K562 (cell line): ENCODE measurements at regions of chr1 and their contacts with region 1.

Region 1: DNA sequence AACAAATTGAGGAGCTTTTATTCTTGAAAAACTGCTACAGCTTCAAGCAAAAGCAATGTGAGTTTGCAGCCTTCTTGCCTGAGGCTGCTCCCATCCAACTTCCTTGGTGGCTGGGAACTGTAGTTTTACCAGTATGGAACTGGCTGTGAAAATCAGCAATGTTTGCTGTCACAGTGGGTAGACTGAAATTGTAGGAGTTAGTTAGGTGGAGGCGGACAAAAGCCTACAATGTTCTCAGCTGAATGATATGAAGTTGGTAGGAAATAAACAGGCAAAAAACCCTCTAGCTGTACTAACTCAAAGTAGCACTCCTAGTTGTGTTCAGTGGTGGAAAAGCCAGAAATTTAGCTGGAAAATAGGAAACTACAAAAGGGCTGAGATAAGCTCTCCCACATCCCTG is 18.5 kb downstream of the HAX1 start:
- DNase-seq: peak in 2 of 4 experiments; percentile 10 to 32
- ATAC-seq: peak; percentile 73
- H3K4me3 ChIP-seq: no peak overlapping the region
- H3K27ac ChIP-seq: peak overlapping the region; percentile 76
- H3K4me1 ChIP-seq: peaks cover 12 to 14% of the 10 kb centered on the region in 2 experiments; a peak in 4 of 5 replicates
- H3K27me3 ChIP-seq: no peaks in the 10 kb centered on the region
- CTCF ChIP-seq: no peak; a peak in 1 of 6 replicates
- EP300 ChIP-seq: no peak
- POLR2A ChIP-seq: no peak
- RAD21 ChIP-seq: no peak

Region 2: DNA sequence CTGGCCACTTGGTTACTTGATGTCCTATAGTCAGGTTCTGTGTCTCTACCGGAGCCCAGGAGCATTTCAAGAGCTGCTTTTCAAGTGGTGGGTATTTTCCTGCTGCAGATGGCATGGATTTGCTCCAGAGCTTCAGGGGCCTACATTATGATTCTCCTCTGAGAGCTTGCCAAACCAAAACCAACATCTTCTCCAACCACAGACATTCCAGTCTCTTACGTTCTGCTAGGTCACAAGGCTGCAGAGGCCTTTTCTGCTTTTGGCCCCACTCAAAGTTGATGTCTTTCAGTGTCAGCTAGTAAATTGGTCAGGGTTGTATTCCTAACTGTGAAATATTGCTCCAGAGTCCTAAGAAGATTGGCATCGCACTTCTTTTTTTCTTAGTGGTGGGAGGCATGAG is 15.2 kb after region 1 on chr1:
- CTCF ChIA-PET with region 1: no interaction called
- POLR2A ChIA-PET with region 1: interaction called, 10 read pairs
- in situ Hi-C with region 1: no loop called
- intact Hi-C with region 1: no loop called
- DNase-seq: no peak
- ATAC-seq: no peak
- H3K4me3 ChIP-seq: no peak overlapping the region
- H3K27ac ChIP-seq: no peak overlapping the region
- H3K4me1 ChIP-seq: peaks cover 9 to 13% of the 10 kb centered on the region in 2 experiments; a peak in 3 of 5 replicates
- H3K27me3 ChIP-seq: no peaks in the 10 kb centered on the region
- CTCF ChIP-seq: no peak
- EP300 ChIP-seq: no peak
- POLR2A ChIP-seq: no peak
- RAD21 ChIP-seq: no peak

Region 3: DNA sequence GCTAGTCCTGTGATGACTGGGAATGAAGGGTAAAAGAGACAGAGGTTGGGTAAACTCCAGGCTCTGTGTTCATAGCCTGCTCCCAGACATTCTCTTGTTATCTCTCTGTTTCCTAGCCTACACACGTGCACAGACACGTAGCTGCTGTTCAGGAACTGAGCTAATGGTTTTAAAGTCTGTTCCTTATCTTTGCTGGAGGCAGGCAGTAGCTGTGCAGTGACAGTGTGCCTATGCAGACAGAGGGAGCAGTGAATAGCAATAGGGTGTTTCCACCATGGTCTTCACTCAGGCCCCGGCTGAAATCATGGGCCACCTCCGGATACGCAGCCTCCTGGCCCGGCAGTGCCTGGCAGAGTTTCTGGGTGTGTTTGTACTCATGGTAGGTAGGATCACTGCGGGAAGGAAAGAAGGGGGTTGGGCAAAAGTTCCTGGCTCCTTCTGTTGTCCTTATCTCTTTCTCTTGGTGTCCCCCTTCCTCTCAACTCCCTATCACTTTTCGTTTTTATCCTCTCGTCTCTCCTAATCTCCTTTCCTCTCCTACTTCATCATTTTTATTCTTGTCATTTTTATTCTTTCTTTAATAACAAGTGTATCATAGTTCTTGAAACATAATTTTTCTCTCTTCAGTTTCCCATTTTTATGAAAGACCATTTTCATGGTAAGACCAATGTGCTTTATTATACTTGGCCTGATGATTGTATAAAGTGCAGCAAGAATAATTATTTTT is 30.1 kb after region 1 on chr1 and contains the start of gene AQP10:
- CTCF ChIA-PET with region 1: no interaction called
- POLR2A ChIA-PET with region 1: interaction called, 5 read pairs
- in situ Hi-C with region 1: no loop called
- intact Hi-C with region 1: loop called (anchors 2 kb)
- DNase-seq: peak; percentile 58 to 93 (median 73)
- ATAC-seq: peak; percentile 91
- H3K4me3 ChIP-seq: peak within 1 kb of the TSS; percentile 31
- H3K27ac ChIP-seq: peak within 1 kb of the TSS; percentile 85
- H3K4me1 ChIP-seq: peaks cover 27 to 40% of the 10 kb centered on the region in 2 experiments; a peak in 4 of 5 replicates
- H3K27me3 ChIP-seq: no peaks in the 10 kb centered on the region
- CTCF ChIP-seq: peak; percentile 20 to 32 (median 30); a peak in 2 of 6 replicates
- EP300 ChIP-seq: peak; percentile 77
- POLR2A ChIP-seq: peak; percentile 67
- RAD21 ChIP-seq: peak; percentile 27 to 40; a peak in 2 of 4 replicates
- polyA plus RNA-seq, gene AQP10: 0.37 to 0.56 TPM

Region 4: DNA sequence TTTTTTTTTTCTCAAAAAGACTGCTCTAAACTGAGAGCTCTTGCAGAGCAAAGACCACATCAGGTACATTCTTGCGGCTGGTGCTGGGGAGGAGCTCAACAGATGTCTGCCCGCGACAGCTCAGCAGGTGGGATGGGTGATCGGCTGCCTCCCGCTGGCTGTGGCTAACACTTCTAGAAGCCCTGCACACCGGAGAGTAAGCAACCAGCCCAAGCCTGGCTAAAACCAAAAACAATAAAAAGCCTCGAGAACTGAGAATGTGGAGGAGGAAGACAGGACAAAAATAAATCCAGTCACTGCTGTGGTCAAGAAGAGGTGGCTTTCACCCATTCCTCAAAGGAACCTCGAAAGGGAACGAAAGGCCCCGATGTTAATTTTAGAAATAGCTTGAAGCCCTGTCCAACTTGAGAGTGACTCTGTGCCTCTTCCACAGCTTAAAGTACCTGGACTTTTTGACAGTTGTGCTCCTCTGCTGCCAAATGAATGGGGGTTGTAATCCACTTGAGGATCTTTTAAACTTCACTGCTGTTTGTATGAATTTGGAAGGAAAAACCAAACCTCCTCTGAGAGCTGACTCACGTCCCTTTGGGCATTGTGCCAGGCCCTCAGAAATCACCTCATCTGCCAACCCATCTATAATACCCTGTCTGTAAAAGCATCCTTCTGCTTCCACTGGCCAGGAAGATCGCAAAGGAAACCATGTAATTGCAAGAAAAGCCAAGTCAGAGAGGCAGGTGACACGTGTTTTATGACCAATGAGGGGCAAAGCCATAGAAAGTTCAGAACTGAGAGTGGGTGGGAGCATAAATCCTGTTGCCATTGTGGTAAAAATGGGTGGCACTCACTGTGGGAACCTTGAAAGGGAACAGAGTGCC is 500.6 kb after region 1 on chr1:
- CTCF ChIA-PET with region 1: no interaction called
- POLR2A ChIA-PET with region 1: no interaction called
- in situ Hi-C with region 1: no loop called
- intact Hi-C with region 1: no loop called
- DNase-seq: peak in 1 of 4 experiments; percentile 31
- ATAC-seq: no peak
- H3K4me3 ChIP-seq: no peak overlapping the region
- H3K27ac ChIP-seq: no peak overlapping the region
- H3K4me1 ChIP-seq: no peaks in the 10 kb centered on the region
- H3K27me3 ChIP-seq: peaks cover 33 to 78% of the 10 kb centered on the region in 2 experiments
- CTCF ChIP-seq: no peak
- EP300 ChIP-seq: no peak
- POLR2A ChIP-seq: no peak
- RAD21 ChIP-seq: no peak